ENCODE measurements at regions of chrX and their contacts with region 1.

Region 1: DNA sequence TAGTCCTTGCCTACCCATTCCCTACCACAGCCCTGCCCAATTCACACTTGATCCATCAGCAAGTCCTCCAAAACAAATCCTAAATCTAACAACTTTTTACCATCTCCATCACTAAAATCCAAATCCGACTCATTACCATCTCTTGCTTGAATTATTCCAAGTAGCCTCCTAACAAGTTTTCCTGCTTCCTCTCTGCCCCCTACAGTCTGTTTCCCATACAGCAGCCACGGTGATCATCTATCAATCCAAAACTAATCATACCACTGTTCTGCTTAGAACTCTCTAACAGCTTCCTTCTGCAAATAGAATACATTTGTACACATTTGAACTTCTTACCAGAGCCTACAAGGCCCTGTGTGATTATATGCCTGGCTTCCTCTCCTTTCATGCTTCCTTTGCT is 133.0 kb downstream of the SHROOM4 start:
- DNase-seq: peak in 1 of 2 experiments; percentile 1
- ATAC-seq: no peak
- H3K4me3 ChIP-seq: no peak overlapping the region
- H3K27ac ChIP-seq: no peak overlapping the region
- H3K4me1 ChIP-seq: no peaks in the 10 kb centered on the region
- CTCF ChIP-seq: no peak
- EP300 ChIP-seq: no peak
- POLR2A ChIP-seq: no peak
- RAD21 ChIP-seq: no peak

Region 2: GRCh38 chrX:50691820-50692219 is 10.8 kb after region 1 on chrX:
- CTCF ChIA-PET with region 1: interaction called, 11 read pairs
- POLR2A ChIA-PET with region 1: no interaction called
- DNase-seq: peak; percentile 18 to 44
- ATAC-seq: peak; percentile 94 to 95
- H3K4me3 ChIP-seq: no peak overlapping the region
- H3K27ac ChIP-seq: no peak overlapping the region
- H3K4me1 ChIP-seq: no peaks in the 10 kb centered on the region
- CTCF ChIP-seq: peak; percentile 51
- EP300 ChIP-seq: no peak
- POLR2A ChIP-seq: no peak
- RAD21 ChIP-seq: peak; percentile 64

Measured in A549 (cell line).